Dendritic cell treated with granulocyte-macrophage colony-stimulating factor and Interleukin-4, amounts not matched to agents 40 ng/mL and 50 ng/mL, for 4 days (primary cell): ENCODE measurements at regions of chr17 and their contacts with region 1.

Region 1: DNA sequence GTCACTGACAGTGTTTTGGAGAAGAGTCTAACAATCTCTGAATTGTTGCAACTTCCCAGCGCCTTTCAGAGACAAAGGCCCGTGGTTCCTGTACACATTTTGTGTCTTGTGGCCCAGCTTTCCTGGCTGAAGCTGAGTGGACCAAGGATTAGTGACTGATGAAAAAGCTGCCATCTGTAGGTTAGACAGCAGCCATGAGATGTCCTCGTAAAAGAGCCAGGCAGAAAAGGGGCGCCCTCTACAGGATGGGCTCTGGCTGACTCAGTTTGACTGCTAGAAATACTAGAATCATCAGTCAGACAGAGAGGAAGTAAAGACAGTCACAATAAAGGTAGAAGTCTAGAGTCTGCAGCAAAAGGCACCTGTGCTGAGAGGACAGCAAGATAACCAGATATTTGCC is 26.5 kb upstream of the NF1 start:
- H3K4me3 Mint-ChIP-seq: no peak overlapping the region
- H3K27ac Mint-ChIP-seq: no peak overlapping the region
- H3K4me1 Mint-ChIP-seq: peaks cover 17% of the 10 kb centered on the region
- H3K27me3 Mint-ChIP-seq: no peaks in the 10 kb centered on the region

Region 2: DNA sequence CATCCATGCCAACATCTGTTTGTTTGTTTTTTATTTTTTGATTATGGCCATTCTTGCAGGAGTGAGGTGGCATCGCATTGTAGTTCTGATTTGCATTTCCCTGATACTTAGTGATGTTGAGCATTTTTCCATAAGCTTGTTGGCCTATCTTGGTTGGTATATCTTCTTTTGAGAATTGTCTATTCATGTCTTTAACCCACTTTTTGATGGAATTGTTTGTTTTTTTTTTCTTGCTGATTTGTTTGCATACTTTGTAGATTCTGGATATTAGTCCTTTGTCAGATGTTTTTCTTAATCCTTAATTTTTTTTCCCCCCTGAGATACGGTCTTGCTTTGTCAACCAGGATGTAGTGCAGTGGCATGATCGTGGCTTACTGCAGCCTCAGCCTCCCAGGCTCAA is 54.4 kb before region 1 on chr17:
- intact Hi-C with region 1: loop called (anchors 5 kb)
- H3K4me3 Mint-ChIP-seq: no peak overlapping the region
- H3K27ac Mint-ChIP-seq: no peak overlapping the region
- H3K4me1 Mint-ChIP-seq: peaks cover 6% of the 10 kb centered on the region
- H3K27me3 Mint-ChIP-seq: peaks cover 4% of the 10 kb centered on the region

Region 3: DNA sequence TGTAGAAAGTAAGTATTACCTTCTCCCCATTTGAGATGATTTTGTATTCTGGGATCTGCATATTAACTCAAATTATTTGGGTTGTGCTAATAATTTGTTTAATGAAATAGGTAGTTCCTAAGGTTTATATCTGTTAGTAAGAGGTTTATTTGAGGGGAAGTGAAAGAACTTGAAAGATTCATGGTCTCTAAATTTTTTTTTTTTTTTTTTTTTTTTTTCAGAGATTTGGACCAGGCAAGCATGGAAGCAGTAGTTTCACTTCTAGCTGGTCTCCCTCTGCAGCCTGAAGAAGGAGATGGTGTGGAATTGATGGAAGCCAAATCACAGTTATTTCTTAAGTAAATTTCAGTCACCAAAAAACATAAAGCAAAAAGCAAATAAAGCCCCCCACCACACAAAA is 163.6 kb after region 1 on chr17:
- intact Hi-C with region 1: no loop called
- H3K4me3 Mint-ChIP-seq: no peak overlapping the region
- H3K27ac Mint-ChIP-seq: no peak overlapping the region
- H3K4me1 Mint-ChIP-seq: peaks cover 7% of the 10 kb centered on the region
- H3K27me3 Mint-ChIP-seq: no peaks in the 10 kb centered on the region